ENCODE measurements at regions of chr3 and their contacts with region 1.

Region 1: DNA sequence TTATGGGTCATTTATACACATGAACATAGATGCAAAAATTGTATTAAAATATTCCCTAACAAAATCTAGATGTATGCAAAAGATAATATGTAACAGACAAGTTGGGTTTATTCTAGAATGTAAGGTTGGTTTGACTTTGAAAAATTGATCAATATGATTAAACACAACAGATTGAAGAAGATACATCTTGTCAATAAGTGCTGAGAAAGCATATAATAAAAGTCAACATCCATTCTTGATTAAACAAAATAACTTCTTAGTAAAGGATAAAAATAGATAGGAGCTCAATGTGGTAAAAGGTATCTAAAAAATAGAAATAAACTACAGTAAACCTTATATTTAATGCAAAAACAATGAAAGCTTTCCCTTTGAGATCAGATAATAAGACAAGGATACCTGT is 38.3 kb downstream of the CCDC39 start:
- DNase-seq: no peak
- H3K27ac ChIP-seq: no peak overlapping the region
- CTCF ChIP-seq: no peak

Region 2: GRCh38 chr3:181344331-181344730 is 703.3 kb after region 1 on chr3:
- CTCF ChIA-PET with region 1: interaction called, 10 read pairs
- POLR2A ChIA-PET with region 1: no interaction called
- DNase-seq: no peak
- H3K27ac ChIP-seq: no peak overlapping the region
- CTCF ChIP-seq: no peak

Measured in RWPE1 (cell line).